ENCODE measurements at regions of chr5 and their contacts with region 1.

Region 1: DNA sequence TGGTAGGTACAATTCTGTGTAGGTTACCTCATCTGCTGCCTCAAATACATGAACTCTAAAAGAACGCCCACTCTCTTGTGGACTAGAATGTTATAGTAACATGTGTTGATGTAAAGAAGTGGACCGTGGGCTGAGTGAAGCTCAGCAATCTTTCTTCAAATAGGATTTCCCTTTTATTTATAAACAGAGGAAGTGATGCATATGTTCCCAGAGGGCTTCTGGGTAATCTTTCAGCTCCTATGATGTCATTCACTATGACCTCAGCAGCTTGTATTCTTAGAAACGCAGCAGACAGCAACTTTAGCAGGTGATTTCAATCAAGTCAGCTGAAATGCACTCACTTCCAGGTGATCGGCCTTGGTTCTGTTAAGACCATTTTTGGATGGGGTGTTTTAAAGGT is 14.4 kb downstream of the F2RL2 start:
- DNase-seq: peak; percentile 36
- CTCF ChIP-seq: no peak

Region 2: GRCh38 chr5:76641514-76642120 is 32.8 kb after region 1 on chr5:
- CTCF ChIA-PET with region 1: interaction called, 12 read pairs
- POLR2A ChIA-PET with region 1: no interaction called
- DNase-seq: peak; percentile 53
- CTCF ChIP-seq: peak; percentile 69